ENCODE measurements at regions of chr7 and their contacts with region 1.

Region 1: GRCh38 chr7:69941077-69941651 is 342.9 kb downstream of the AUTS2 start:
- DNase-seq: no peak
- ATAC-seq: no peak
- H3K4me3 ChIP-seq: no peak overlapping the region
- H3K27ac ChIP-seq: no peak overlapping the region
- H3K4me1 ChIP-seq: no peaks in the 10 kb centered on the region
- H3K27me3 ChIP-seq: no peaks in the 10 kb centered on the region
- CTCF ChIP-seq: no peak

Region 2: DNA sequence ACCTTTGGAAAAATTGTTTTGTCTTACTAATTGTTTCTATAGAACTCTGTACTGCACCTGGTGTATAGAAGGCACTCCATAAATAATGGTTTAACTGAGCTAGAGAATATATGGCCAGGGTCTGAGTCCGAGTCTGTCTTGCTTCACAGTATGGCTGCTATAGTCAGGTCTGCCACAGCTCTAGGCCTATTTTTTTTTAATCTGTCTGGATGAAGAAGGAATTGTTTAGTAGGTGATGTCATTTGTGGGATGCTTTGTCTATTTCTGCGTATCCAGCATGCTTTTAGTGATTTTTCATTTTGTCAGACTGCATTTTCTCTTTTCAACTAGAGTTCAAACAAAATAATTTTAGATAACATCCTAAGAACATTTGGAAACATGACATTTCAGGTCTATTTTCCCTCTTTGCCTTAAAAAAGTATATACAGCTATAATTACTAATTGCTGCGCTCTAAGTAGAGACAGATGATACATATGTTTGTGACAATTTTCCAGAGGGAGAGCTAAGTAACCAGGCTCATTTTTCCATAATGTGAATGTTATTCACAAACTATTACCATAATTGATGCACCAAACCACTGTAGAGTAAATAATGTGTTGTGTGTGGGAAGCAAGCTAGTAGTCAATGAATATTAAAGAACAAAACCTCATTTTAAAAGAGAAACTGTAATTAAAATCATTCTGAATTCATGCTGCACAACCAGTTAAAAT is 18.8 kb after region 1 on chr7:
- CTCF ChIA-PET with region 1: no interaction called
- POLR2A ChIA-PET with region 1: interaction called, 13 read pairs
- in situ Hi-C with region 1: no loop called
- intact Hi-C with region 1: no loop called
- DNase-seq: no peak
- ATAC-seq: no peak
- H3K4me3 ChIP-seq: no peak overlapping the region
- H3K27ac ChIP-seq: no peak overlapping the region
- H3K4me1 ChIP-seq: no peaks in the 10 kb centered on the region
- H3K27me3 ChIP-seq: no peaks in the 10 kb centered on the region
- CTCF ChIP-seq: no peak

Measured in Panc1 (cell line).